Spleen (tissue), 13 donors: ENCODE measurements at regions of chrX and their contacts with region 1.

Region 1: GRCh38 chrX:140141444-140142029 is 176.2 kb upstream of the CXorf66 start:
- DNase-seq: no peak
- H3K4me3 ChIP-seq: no peak overlapping the region
- H3K27ac ChIP-seq: no peak overlapping the region
- H3K4me1 ChIP-seq: no peaks in the 10 kb centered on the region
- H3K27me3 ChIP-seq: peaks cover 0 to 5% (median 0%) of the 10 kb centered on the region in 7 donors
- CTCF ChIP-seq: peak in 10 of 11 experiments; percentile 33 to 65 (median 57)
- POLR2A ChIP-seq: no peak

Region 2: DNA sequence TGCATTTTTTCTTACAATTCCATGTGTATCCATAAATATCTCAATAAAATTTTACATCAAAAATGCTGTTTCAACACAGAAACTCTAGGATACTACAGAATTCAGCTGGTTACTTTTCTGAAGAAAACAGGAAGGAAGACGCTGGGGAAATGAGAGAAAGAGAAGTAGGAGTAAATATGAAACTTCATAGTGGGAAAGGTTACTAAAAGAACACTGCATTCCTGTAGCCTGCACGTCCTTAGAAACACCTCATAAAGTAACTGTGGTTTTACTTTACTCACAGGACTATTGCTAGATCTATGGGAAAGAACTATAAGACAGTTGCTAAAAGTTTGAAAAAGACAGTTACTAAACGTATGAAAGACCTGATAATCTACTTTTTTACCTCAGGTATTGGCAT is 231.8 kb before region 1 on chrX:
- intact Hi-C with region 1: no loop called
- DNase-seq: no peak
- H3K4me3 ChIP-seq: no peak overlapping the region
- H3K27ac ChIP-seq: peak overlapping the region in 2 of 8 donors; percentile 15 to 28
- H3K4me1 ChIP-seq: peaks cover 0 to 25% (median 15%) of the 10 kb centered on the region in 6 donors
- H3K27me3 ChIP-seq: no peaks in the 10 kb centered on the region
- CTCF ChIP-seq: no peak
- POLR2A ChIP-seq: no peak

Region 3: DNA sequence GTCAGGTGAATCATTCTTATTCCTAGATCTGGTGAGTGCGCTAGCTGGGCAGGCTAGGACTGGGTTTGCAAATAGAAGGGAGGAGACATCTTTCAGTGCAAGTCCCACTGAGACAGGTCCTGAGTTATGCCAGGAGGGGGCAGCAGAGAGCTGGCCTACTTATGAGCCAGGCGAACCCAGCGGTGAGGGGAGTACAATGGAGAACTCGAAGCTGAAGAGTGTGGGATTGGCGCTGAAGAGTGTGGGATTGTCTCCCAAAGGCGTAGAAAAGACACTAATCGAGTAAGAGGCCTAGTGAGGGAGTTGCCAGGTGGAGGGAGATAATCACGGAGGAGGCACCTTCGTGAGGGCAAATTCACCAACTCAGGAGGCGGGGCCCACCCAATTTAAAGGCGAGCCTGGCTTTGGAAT is 84.5 kb before region 1 on chrX:
- intact Hi-C with region 1: loop called (anchors 5 kb)
- DNase-seq: peak; percentile 83
- H3K4me3 ChIP-seq: no peak overlapping the region
- H3K27ac ChIP-seq: no peak overlapping the region
- H3K4me1 ChIP-seq: peaks cover 0 to 3% (median 0%) of the 10 kb centered on the region in 6 donors
- H3K27me3 ChIP-seq: peaks cover 0 to 6% (median 0%) of the 10 kb centered on the region in 7 donors
- CTCF ChIP-seq: peak; percentile 10 to 77 (median 68)
- POLR2A ChIP-seq: no peak

Region 4: GRCh38 chrX:140071037-140071436 is 70.5 kb before region 1 on chrX:
- intact Hi-C with region 1: loop called (anchors 5 kb)
- DNase-seq: no peak
- H3K4me3 ChIP-seq: no peak overlapping the region
- H3K27ac ChIP-seq: no peak overlapping the region
- H3K4me1 ChIP-seq: no peaks in the 10 kb centered on the region
- H3K27me3 ChIP-seq: no peaks in the 10 kb centered on the region
- CTCF ChIP-seq: no peak
- POLR2A ChIP-seq: no peak